A673 (cell line): ENCODE measurements at regions of chr10 and their contacts with region 1.

Region 1: GRCh38 chr10:27685681-27686080 is 59.9 kb downstream of the MKX start:
- DNase-seq: no peak
- H3K4me3 ChIP-seq: no peak overlapping the region
- H3K27ac ChIP-seq: no peak overlapping the region
- H3K4me1 ChIP-seq: no peaks in the 10 kb centered on the region
- H3K27me3 ChIP-seq: peaks cover 3% of the 10 kb centered on the region
- CTCF ChIP-seq: no peak

Region 2: DNA sequence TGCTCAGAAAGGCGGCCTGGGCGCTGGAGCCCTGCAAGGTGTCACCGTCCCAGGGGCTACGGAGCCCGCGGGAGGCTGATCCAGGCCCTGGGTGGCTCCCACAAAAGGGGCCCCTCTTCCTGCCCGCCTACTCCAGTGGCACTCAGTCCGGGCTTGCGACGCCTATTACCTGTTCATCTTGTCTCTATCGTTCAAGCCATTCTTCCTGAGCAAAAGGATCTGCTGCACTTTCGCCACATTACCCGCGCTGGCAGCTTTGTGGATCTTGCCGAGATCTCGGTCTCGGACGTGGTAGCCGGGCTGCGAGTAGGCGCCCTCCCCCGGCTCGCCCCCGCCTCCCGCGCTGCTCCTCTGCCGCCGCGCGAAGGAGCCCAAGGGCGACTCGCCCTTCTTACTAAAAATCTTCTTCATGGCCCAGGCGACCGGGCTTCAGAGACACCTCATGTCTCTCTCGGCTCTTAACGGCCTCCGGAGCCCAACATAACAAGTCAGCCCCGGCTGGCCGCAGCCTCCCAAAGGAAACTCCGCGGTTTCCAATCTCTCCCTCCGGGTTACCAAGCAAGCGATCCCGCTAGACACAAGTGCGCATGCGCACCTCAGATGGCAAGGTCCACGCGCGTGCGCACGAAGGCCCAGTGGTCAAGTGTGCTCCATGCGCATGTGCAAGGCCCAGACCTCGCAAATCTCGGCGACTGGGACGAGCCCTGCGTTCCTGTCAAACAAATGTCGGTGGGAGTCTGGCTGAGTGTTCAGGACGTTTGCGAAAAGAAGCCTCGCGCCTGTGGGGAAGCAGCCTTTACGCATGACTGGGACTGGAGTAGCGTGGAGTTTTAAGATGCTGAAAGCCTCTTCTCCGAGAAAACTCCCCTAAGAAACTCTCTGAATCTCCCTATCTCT is 585.5 kb before region 1 on chr10 and contains the start of gene ANKRD26:
- CTCF ChIA-PET with region 1: no interaction called
- POLR2A ChIA-PET with region 1: interaction called, 32 read pairs
- intact Hi-C with region 1: no loop called
- DNase-seq: peak; percentile 99
- H3K4me3 ChIP-seq: peak within 1 kb of the TSS; percentile 77
- H3K27ac ChIP-seq: peak within 1 kb of the TSS; percentile 92
- H3K4me1 ChIP-seq: no peaks in the 10 kb centered on the region
- H3K27me3 ChIP-seq: no peaks in the 10 kb centered on the region
- CTCF ChIP-seq: no peak
- total RNA-seq, gene ANKRD26: 15.2 and 16.9 TPM in 2 replicates

Region 3: GRCh38 chr10:27771231-27771630 is 85.5 kb after region 1 on chr10:
- CTCF ChIA-PET with region 1: no interaction called
- POLR2A ChIA-PET with region 1: no interaction called
- intact Hi-C with region 1: no loop called
- DNase-seq: no peak
- H3K4me3 ChIP-seq: no peak overlapping the region
- H3K27ac ChIP-seq: no peak overlapping the region
- H3K4me1 ChIP-seq: no peaks in the 10 kb centered on the region
- H3K27me3 ChIP-seq: peaks cover 12% of the 10 kb centered on the region
- CTCF ChIP-seq: no peak